ENCODE measurements at regions of chr2 and their contacts with region 1.

Region 1: DNA sequence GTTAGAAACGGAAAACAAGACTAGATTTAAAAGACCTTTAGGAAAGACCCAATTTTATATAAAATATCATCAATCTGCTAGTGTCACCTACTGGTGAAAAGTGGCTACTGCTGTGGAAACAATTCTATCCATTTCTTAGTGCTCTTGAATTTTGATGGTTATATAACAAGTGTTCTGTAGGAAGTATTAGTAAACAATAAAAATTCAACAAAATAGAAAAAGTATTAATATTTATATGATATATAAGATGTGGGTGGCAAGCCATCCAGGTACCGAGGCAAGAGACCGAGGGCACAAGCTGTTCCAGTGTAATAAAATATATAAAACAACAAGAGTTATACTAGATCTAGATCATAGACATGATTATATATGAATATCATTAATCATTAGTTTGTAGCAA is 6.2 kb upstream of the TMEM87B start:
- DNase-seq: peak in 1 of 2 donors; percentile 20
- H3K4me3 ChIP-seq: no peak overlapping the region
- H3K27ac ChIP-seq: no peak overlapping the region
- H3K4me1 ChIP-seq: peaks cover 4 to 8% of the 10 kb centered on the region in 2 donors
- H3K27me3 ChIP-seq: no peaks in the 10 kb centered on the region
- CTCF ChIP-seq: peak; percentile 67 to 92 (median 80)
- POLR2A ChIP-seq: no peak

Region 2: GRCh38 chr2:111986116-111986900 is 62.6 kb before region 1 on chr2:
- intact Hi-C with region 1: loop called (anchors 10 kb)
- DNase-seq: no peak
- H3K4me3 ChIP-seq: no peak overlapping the region
- H3K27ac ChIP-seq: no peak overlapping the region
- H3K4me1 ChIP-seq: no peaks in the 10 kb centered on the region
- H3K27me3 ChIP-seq: no peaks in the 10 kb centered on the region
- CTCF ChIP-seq: no peak
- POLR2A ChIP-seq: no peak